PC-3 (cell line): ENCODE measurements at regions of chr14 and their contacts with region 1.

Region 1: DNA sequence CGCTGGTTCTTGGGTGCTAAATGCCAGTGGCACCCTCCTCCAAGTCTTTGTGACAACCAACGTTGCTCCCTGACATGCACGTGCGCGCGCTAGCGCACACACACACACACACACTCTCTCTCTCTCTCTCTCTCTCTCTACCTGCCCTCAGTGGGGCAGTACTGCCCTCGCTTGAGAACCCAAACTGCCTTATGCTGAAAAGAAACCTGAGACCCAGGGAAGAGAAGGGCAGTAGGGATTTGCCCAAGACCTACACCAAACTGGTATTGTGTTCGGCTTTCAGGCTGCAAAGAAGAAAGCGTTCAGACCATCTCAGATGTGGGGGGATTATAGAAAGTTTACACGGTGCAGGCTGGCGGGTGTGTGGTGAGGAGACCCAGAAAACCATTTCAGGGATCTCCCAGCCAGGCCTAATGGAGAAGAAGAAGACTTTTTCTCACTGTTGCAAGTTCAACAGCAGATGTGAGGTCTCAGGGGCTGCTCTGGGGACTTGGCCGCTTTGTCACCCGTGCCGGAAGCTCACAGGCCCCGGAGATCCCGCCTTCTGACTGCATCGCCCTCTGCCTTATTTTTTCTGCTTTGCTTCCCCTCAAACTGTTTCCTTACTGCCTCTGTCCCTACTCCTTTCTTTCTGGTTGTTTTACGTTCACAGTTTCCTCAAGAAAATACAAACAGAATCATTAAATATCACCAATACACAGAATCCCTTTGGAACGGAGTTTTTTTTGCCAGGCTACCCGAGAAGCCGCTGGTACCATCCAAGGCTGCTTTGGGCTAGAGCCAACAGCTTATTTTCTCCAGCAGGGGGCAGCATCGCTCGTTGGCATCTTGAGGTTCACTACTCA is 82.4 kb downstream of the PPM1A start:
- DNase-seq: peak; percentile 96
- ATAC-seq: peak; percentile 54
- H3K4me3 ChIP-seq: peak overlapping the region; percentile 48
- H3K27ac ChIP-seq: no peak overlapping the region
- H3K4me1 ChIP-seq: no peaks in the 10 kb centered on the region
- H3K27me3 ChIP-seq: peaks cover 14% of the 10 kb centered on the region; the same call in 1 of the 2 replicates
- CTCF ChIP-seq: peak; percentile 100

Region 2: DNA sequence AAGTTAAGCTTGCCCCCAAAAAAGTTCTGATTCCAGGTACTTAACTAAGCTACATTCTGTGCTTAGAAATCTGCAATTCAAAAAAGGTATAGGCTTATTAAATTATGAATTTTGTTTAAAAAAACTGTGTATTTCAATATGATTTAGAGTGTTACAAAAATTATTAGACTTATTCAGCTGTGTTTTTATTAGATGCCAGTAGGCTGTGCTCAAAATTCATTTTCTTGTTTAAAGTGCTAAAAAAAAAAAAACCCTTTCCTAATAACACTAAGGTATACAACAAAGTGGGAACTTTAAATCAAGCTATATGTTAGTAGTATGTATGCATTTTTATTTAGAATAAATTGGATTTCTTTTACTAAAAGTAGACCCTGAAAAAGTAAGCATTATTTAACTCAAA is 386.5 kb before region 1 on chr14:
- CTCF ChIA-PET with region 1: no interaction called
- POLR2A ChIA-PET with region 1: no interaction called
- intact Hi-C with region 1: no loop called
- DNase-seq: no peak
- ATAC-seq: no peak; the same call in 1 of the 2 replicates
- H3K4me3 ChIP-seq: no peak overlapping the region
- H3K27ac ChIP-seq: no peak overlapping the region
- H3K4me1 ChIP-seq: no peaks in the 10 kb centered on the region
- H3K27me3 ChIP-seq: peaks cover 17% of the 10 kb centered on the region
- CTCF ChIP-seq: peak; percentile 52

Region 3: GRCh38 chr14:60266021-60266937 is 65.1 kb before region 1 on chr14:
- CTCF ChIA-PET with region 1: interaction called, 7 read pairs
- POLR2A ChIA-PET with region 1: no interaction called
- intact Hi-C with region 1: loop called (anchors 5 kb)
- DNase-seq: peak; percentile 82
- ATAC-seq: peak; percentile 94
- H3K4me3 ChIP-seq: no peak overlapping the region
- H3K27ac ChIP-seq: no peak overlapping the region
- H3K4me1 ChIP-seq: peaks cover 5% of the 10 kb centered on the region; the same call in 1 of the 2 replicates
- H3K27me3 ChIP-seq: no peaks in the 10 kb centered on the region
- CTCF ChIP-seq: peak; percentile 100